Natural killer cell (primary cell): ENCODE measurements at regions of chr19 and their contacts with region 1.

Region 1: DNA sequence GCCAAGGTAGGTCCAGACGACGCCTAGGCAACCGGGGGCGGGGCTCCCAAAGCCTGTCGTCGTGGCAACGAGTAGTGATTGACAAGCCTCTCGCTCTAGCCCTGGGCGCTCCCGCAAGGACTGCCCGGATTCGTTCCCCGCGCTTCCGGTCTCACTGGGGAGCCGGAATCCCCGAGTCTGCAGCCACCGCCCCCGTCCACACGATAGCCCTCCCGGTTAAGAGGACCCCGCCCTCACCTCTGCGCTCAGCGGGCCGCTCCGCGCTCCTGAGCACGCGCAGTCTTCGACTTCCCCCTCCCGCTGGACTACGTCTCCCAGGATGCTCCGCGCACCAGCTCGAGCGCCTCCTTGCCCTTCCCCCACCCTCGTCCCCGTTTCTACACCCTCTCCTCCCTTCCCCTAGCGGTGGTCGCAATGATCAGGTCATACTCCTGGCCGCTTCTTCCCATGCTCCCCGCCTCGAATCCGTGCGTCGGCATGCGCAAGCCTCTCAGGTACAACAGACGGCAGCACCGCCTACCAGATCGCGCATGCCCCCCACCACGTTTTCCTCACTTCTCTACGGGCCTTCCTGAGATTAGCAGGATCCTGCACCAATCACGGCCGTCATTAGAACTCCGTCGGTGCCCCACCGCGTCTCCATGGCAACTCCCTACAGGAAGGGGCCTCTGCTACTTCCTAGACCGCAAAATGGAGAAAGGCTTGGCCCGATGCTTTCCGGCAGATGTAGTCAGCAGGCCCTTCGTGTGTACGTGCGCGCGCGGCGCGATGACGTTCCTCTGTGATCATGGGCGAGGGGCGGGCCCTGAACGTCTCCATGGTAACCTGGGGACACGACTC is at the start of gene MZF1:
- DNase-seq: peak; percentile 100
- ATAC-seq: peak; percentile 61 to 83 (median 71)
- H3K4me3 ChIP-seq: peak within 1 kb of the TSS; percentile 68
- H3K4me3 Mint-ChIP-seq: peak within 1 kb of the TSS; percentile 98
- H3K27ac ChIP-seq: peak within 1 kb of the TSS; percentile 98
- H3K27ac Mint-ChIP-seq: peak within 1 kb of the TSS; percentile 99
- H3K4me1 ChIP-seq: peaks cover 38% of the 10 kb centered on the region
- H3K4me1 Mint-ChIP-seq: peaks cover 33 to 45% of the 10 kb centered on the region in 2 donors
- H3K27me3 ChIP-seq: no peaks in the 10 kb centered on the region
- H3K27me3 Mint-ChIP-seq: no peaks in the 10 kb centered on the region
- CTCF ChIP-seq: no peak
- total RNA-seq, gene MZF1: 24.9 to 40.1 (median 37.3) TPM

Region 2: GRCh38 chr19:58144467-58144866 is 428.6 kb before region 1 on chr19:
- intact Hi-C with region 1: no loop called
- DNase-seq: no peak
- ATAC-seq: no peak
- H3K4me3 ChIP-seq: no peak overlapping the region
- H3K4me3 Mint-ChIP-seq: no peak overlapping the region
- H3K27ac ChIP-seq: no peak overlapping the region
- H3K27ac Mint-ChIP-seq: no peak overlapping the region
- H3K4me1 ChIP-seq: no peaks in the 10 kb centered on the region
- H3K4me1 Mint-ChIP-seq: peaks cover 4% of the 10 kb centered on the region in 2 donors
- H3K27me3 ChIP-seq: no peaks in the 10 kb centered on the region
- H3K27me3 Mint-ChIP-seq: no peaks in the 10 kb centered on the region
- CTCF ChIP-seq: no peak

Region 3: DNA sequence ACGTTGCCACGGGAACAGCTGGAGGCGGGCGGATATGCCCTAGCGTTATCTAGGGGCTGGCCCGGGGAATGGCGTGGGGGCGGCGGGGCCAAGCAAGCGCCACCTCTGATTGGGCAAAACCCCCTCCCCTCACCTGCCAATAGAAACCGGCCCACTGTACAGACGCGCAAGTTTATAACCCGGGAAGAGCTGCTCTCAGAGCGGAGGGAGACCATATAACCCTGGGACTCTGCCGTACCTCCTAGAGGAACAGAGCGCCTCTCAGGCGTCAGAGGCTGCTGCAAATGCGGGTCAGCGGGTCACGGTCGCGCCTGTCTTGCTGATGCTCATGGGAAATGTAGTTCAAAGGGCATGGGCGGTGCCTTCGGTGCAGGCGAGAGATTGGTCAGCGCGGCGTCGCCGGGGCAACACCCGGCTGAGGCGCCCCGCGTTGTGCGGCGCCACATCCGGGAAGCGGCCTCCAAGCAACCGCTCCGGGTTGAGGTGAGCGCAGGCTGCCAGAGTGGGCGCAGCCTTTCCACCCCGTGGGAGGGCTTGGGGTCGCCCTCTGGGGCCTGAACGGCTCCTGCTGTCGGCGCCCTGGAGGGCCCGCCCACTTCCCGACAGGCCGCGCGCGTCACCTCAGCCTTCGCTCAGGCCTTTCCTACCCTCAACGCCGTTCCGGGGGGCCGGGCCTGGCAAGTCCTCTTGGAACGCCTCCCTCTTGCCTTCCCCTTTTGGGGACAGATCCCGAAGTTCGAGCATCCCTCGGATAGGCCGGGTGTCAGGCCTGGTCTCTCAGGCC is 97.1 kb before region 1 on chr19 and contains the start of gene ZNF446:
- intact Hi-C with region 1: loop called (anchors 1 kb)
- DNase-seq: peak; percentile 93 to 99
- ATAC-seq: peak; percentile 84 to 93 (median 88)
- H3K4me3 ChIP-seq: peak within 1 kb of the TSS; percentile 59
- H3K4me3 Mint-ChIP-seq: peak within 1 kb of the TSS; percentile 93
- H3K27ac ChIP-seq: peak within 1 kb of the TSS; percentile 90
- H3K27ac Mint-ChIP-seq: peak within 1 kb of the TSS; percentile 94 to 99
- H3K4me1 ChIP-seq: peaks cover 21% of the 10 kb centered on the region
- H3K4me1 Mint-ChIP-seq: peaks cover 8 to 18% of the 10 kb centered on the region in 2 donors
- H3K27me3 ChIP-seq: no peaks in the 10 kb centered on the region
- H3K27me3 Mint-ChIP-seq: no peaks in the 10 kb centered on the region
- CTCF ChIP-seq: no peak
- total RNA-seq, gene ZNF446: 11.9 to 14.5 (median 13.5) TPM

Region 4: DNA sequence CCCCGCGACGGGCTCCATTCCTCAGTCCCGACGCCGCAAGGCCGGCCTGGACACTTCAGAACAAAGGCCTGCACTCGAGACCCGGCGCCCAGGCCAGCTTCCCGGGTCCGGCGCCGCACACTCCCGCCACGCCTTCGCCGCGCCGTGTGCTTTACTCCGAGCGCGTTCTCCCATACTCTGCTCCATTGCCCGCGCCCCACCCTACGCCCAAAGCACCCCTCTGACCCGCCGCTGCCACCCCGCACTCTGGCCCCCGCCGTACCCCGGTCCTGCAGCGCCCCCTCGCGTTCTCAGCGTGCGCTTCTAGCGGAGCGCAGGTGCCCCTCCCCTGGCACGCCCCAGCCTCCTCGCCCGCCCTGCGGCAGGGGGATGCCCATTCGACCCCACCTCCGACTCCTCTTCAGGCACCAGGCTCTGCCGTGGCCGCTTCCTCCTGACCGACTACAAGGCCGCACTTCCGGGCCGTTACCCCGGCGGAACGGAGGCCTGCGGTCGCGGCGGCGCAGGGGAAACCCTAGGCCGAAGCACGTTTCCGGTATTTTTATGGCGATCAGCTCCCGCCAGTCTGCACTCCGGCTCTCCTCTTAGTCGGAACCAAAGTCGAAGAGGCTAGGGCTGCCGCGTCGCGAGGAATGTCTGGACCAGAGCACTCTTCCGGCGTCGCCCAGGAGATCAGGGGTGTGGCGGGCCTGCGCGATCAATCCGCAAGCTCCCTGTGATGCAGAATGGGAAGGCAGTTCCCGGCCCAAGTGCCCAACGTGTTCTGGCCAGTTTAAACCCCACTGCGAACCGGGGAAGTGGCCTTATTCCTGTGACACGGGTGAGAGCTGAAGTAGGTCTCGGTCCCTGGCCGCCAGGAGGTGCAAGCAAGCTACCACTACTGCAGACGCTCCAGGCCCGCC is 53.4 kb before region 1 on chr19 and contains the start of gene ZBTB45:
- intact Hi-C with region 1: loop called (anchors 1 kb)
- DNase-seq: peak; percentile 91 to 95
- ATAC-seq: peak; percentile 80 to 93 (median 83)
- H3K4me3 ChIP-seq: peak within 1 kb of the TSS; percentile 81
- H3K4me3 Mint-ChIP-seq: peak within 1 kb of the TSS; percentile 97
- H3K27ac ChIP-seq: peak within 1 kb of the TSS; percentile 98
- H3K27ac Mint-ChIP-seq: peak within 1 kb of the TSS; percentile 97 to 100
- H3K4me1 ChIP-seq: peaks cover 38% of the 10 kb centered on the region
- H3K4me1 Mint-ChIP-seq: peaks cover 25 to 46% of the 10 kb centered on the region in 2 donors
- H3K27me3 ChIP-seq: no peaks in the 10 kb centered on the region
- H3K27me3 Mint-ChIP-seq: no peaks in the 10 kb centered on the region
- CTCF ChIP-seq: peak; percentile 71
- total RNA-seq, gene ZBTB45: 9.6 to 12.6 (median 9.8) TPM

Region 5: GRCh38 chr19:58543826-58544590 is 29.0 kb before region 1 on chr19 and contains the start of gene TRIM28:
- intact Hi-C with region 1: loop called (anchors 1 kb)
- DNase-seq: peak; percentile 100
- ATAC-seq: peak; percentile 85 to 94 (median 86)
- H3K4me3 ChIP-seq: peak within 1 kb of the TSS; percentile 51
- H3K4me3 Mint-ChIP-seq: peak within 1 kb of the TSS; percentile 98
- H3K27ac ChIP-seq: peak within 1 kb of the TSS; percentile 93
- H3K27ac Mint-ChIP-seq: peak within 1 kb of the TSS; percentile 99
- H3K4me1 ChIP-seq: peaks cover 27% of the 10 kb centered on the region
- H3K4me1 Mint-ChIP-seq: peaks cover 31 to 34% of the 10 kb centered on the region in 2 donors
- H3K27me3 ChIP-seq: peaks cover 2% of the 10 kb centered on the region
- H3K27me3 Mint-ChIP-seq: peaks cover 6 to 12% of the 10 kb centered on the region in 2 donors
- CTCF ChIP-seq: no peak
- total RNA-seq, gene TRIM28: 330 to 451 (median 408) TPM

Region 6: DNA sequence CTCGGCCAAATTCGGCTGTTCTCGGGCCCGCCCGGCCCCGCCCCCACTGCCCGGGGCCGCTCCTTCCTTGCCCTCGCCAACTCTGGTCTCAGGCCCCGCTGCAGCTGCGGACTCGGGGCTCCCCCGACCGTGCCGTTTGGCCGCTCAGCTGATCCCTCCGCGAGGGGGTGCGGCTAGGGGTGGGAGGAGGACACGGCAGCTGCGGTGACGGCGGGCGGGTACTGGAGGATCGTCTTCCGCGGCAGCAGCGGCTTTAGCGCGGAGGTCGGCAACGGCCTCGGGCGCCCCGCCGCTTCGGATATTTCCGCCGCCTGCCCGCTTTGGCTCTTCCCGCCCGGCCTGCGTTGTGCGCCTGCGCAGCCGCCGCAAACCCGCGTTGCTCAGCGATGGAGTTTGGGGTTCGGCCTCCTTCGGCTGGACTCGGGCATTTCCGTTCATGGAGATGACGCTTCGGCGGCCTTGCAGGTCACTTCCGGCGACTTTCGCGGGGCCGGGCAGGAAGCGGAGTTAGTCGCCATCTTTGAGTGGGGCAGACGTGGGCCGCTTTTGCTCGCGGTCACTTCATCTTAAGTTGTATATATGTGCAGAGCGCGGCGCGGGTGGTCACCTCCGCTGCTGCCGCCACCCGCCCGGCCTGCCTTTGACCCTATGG is 14.3 kb before region 1 on chr19:
- intact Hi-C with region 1: loop called (anchors 1 kb)
- DNase-seq: peak; percentile 99 to 100
- ATAC-seq: peak; percentile 64 to 85 (median 68)
- H3K4me3 ChIP-seq: peak overlapping the region; percentile 95
- H3K4me3 Mint-ChIP-seq: peak overlapping the region; percentile 98
- H3K27ac ChIP-seq: peak overlapping the region; percentile 100
- H3K27ac Mint-ChIP-seq: peak overlapping the region; percentile 99
- H3K4me1 ChIP-seq: peaks cover 78% of the 10 kb centered on the region
- H3K4me1 Mint-ChIP-seq: peaks cover 46 to 91% of the 10 kb centered on the region in 2 donors
- H3K27me3 ChIP-seq: no peaks in the 10 kb centered on the region
- H3K27me3 Mint-ChIP-seq: no peaks in the 10 kb centered on the region
- CTCF ChIP-seq: no peak